Activated naive CD4-positive, alpha-beta T cell treated with anti-CD3 and anti-CD28 coated beads for 36 hours (primary cell): ENCODE measurements at regions of chr4 and their contacts with region 1.

Region 1: DNA sequence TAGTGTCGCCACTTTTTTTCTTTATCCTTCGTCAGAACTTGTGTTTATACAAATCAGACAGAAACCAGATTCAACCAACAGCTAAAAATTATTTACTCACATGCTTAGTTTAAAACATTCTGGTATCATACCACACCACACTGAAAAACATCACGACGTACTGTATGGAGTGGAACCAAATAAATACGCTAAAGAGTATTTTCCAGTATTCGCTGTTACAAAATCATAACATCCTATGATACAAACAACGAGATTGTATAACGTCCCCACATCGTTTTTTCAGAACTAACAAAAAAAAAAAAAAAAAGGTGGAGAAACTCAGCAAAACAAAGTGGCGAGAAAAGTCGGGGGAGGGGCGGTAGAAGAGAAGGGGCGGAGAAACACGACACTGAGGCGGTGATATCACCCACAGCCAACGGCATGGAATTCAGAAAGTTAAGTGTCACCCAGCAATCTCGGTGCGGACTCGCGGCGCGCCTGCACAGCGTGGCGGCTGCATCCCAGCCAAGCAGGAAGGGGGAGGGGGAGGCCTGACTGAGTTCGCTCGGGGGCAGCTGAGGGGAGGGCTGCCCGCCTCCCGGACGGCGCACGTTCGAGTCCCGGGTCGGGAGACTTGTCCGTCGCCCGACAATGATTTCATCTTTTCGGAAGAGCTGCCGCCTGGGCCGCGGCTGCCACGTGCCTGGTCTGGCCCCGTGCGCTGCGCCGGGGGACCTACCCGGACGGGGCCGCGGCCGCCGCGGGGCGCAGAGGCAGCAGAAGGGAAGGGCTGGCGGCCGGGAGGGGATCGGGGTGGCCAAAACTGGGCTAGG is 920 bp downstream of the SETD7 start:
- DNase-seq: peak; percentile 92
- H3K4me3 Mint-ChIP-seq: peak overlapping the region; percentile 94
- H3K27ac Mint-ChIP-seq: peak overlapping the region; percentile 90
- H3K4me1 Mint-ChIP-seq: peaks cover 41% of the 10 kb centered on the region
- H3K27me3 Mint-ChIP-seq: no peaks in the 10 kb centered on the region

Region 2: GRCh38 chr4:139015269-139015947 is 539.7 kb before region 1 on chr4 and contains the start of gene NOCT:
- CTCF ChIA-PET with region 1: no interaction called
- intact Hi-C with region 1: loop called (anchors 1 kb)
- DNase-seq: peak; percentile 97
- H3K4me3 Mint-ChIP-seq: peak within 1 kb of the TSS; percentile 91
- H3K27ac Mint-ChIP-seq: peak within 1 kb of the TSS; percentile 96
- H3K4me1 Mint-ChIP-seq: peaks cover 48% of the 10 kb centered on the region
- H3K27me3 Mint-ChIP-seq: no peaks in the 10 kb centered on the region
- total RNA-seq, gene NOCT: 9.3 to 10.4 TPM

Region 3: DNA sequence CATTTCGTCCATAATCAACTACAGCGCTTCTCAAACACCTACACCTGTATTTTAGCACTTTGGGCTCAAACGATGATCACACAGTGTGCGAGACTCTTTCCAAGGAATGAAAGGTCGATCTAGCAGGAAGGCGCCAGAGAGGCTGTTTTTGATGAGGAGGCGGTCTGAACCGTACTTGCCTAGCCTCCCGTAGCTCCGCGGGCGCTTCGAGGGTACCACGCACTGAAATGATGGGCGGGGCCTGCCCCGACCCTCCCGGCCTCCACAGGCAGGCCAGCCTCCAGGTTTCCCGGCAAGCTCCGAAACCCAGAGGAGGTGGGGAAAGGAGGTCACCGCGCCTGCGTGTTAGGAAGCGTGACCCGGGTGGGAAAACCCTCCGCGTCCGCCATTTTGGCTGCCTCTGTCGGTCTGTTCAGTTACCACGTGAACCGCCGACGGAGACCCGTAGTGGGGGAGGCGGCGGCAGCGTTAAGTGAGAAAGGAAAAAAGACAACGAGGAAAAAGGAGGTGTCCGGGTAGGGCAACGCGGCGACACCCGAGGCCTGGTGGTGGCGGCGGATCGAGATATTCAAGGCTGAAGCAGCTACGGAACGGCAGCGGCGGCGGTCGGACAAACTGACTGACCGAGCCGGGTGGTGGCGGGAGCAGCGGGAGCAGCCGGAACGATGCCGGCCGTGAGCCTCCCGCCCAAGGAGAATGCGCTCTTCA is 253.8 kb before region 1 on chr4 and contains the start of gene NAA15:
- CTCF ChIA-PET with region 1: interaction called, 3 read pairs
- intact Hi-C with region 1: loop called (anchors 1 kb)
- DNase-seq: peak; percentile 98
- H3K4me3 Mint-ChIP-seq: peak within 1 kb of the TSS; percentile 100
- H3K27ac Mint-ChIP-seq: peak within 1 kb of the TSS; percentile 98
- H3K4me1 Mint-ChIP-seq: peaks cover 56% of the 10 kb centered on the region
- H3K27me3 Mint-ChIP-seq: no peaks in the 10 kb centered on the region
- total RNA-seq, gene NAA15: 91.5 to 94.0 TPM

Region 4: DNA sequence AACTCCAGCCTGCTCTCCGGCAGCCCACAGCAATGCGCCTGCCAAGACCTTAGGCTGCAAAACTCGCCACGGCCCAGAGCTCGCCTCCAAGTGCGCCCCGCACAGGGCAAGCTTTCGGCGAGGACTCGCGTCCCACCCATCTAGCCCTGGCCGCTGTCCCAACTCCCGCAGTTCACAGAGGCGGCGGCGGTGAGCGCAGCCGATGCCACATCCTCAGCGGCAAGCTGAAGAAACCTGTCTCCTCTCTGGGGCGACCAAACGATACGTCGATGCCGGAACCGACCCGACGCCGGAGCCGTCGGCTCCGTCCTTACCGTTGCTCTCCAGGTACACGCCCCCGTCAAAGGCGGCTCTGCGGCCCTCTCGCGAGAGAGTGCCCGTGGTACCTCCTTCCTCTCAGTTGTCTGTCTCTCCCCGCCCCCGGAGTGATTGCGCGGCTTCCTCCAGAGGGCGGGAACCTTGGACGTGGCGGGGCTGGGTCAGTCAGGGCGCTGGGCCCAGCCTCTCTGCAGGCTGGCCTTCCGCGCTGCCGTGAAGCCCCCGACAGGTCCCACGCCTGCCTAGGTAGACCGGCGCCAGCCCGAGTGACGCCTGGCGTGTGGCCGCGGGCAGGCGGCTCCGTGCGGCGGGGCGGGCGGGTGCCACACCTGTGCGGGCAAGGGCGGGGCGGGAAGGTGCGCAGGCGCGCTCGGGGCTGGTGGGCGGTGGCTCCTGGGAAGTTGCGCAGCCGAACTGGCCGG is 101.6 kb before region 1 on chr4:
- CTCF ChIA-PET with region 1: interaction called, 3 read pairs
- intact Hi-C with region 1: loop called (anchors 1 kb)
- DNase-seq: peak; percentile 98
- H3K4me3 Mint-ChIP-seq: peak overlapping the region; percentile 97
- H3K27ac Mint-ChIP-seq: peak overlapping the region; percentile 98
- H3K4me1 Mint-ChIP-seq: peaks cover 50% of the 10 kb centered on the region
- H3K27me3 Mint-ChIP-seq: no peaks in the 10 kb centered on the region

Region 5: GRCh38 chr4:139522457-139522856 is 32.6 kb before region 1 on chr4:
- CTCF ChIA-PET with region 1: no interaction called
- intact Hi-C with region 1: no loop called
- DNase-seq: no peak
- H3K4me3 Mint-ChIP-seq: no peak overlapping the region
- H3K27ac Mint-ChIP-seq: no peak overlapping the region
- H3K4me1 Mint-ChIP-seq: peaks cover 7% of the 10 kb centered on the region
- H3K27me3 Mint-ChIP-seq: no peaks in the 10 kb centered on the region

Region 6: DNA sequence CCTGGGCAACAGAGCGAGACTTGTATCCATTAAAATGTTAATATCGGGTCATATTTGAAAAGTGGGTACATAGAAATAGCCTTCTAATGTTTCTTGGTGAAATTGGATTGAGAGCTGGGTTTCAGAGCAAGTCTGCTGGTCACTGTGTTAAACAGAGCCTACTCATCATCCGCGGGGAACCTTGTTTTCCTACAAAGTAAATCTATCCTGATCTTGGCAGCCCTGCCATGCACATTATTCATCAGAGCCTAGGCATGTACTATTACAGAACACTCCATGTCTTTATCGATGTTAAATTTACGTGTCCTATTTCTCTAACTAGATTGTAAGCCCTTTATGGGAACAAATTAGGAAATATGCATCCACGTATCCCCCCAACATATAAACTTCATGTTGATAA is 17.8 kb before region 1 on chr4:
- CTCF ChIA-PET with region 1: no interaction called
- intact Hi-C with region 1: no loop called
- DNase-seq: no peak
- H3K4me3 Mint-ChIP-seq: no peak overlapping the region
- H3K27ac Mint-ChIP-seq: no peak overlapping the region
- H3K4me1 Mint-ChIP-seq: no peaks in the 10 kb centered on the region
- H3K27me3 Mint-ChIP-seq: no peaks in the 10 kb centered on the region

Region 7: GRCh38 chr4:139593091-139593564 is 38.0 kb after region 1 on chr4:
- CTCF ChIA-PET with region 1: no interaction called
- intact Hi-C with region 1: no loop called
- DNase-seq: no peak
- H3K4me3 Mint-ChIP-seq: no peak overlapping the region
- H3K27ac Mint-ChIP-seq: no peak overlapping the region
- H3K4me1 Mint-ChIP-seq: no peaks in the 10 kb centered on the region
- H3K27me3 Mint-ChIP-seq: peaks cover 2% of the 10 kb centered on the region

Region 8: DNA sequence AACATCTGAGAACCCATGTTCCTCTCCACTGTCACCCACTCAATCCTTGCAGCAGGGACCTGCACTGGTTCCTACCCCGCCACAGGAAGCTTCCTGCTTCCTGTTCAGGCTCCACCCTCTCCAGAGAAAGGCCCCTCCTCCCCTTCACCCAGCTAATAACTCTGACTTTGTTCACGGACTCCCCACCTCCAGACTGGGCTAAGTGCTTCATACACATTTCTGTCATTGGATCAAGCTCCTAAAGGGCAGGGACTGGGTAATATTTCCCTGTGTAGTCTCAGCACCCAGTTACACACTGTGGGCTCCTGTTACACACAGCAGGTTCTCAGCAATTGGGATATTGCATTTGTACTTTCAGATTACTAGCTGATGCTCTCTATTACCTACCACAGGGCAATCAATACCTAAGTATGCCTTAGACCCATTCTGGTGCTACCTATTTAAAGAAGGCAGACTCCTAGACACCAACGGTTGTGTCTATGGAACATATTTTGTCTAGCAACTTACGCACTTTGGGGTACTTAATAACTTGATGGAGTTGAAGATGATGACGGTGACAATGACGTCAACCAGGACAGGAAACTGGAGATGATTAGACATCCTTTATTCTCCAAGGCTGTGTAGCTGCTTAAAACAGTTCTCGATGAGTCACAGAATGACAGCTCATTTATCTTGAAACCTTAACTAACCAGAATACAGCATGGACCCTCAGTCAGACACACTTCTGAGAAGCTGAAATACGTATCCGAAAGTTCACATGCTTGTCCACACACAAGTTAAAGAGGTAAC is 540.8 kb after region 1 on chr4:
- CTCF ChIA-PET with region 1: no interaction called
- intact Hi-C with region 1: loop called (anchors 2 kb)
- DNase-seq: peak; percentile 91
- H3K4me3 Mint-ChIP-seq: peak overlapping the region; percentile 90
- H3K27ac Mint-ChIP-seq: peak overlapping the region; percentile 99
- H3K4me1 Mint-ChIP-seq: peaks cover 77% of the 10 kb centered on the region
- H3K27me3 Mint-ChIP-seq: no peaks in the 10 kb centered on the region

Region 9: GRCh38 chr4:140373328-140374129 is 818.4 kb after region 1 on chr4 and contains the start of gene SCOC:
- CTCF ChIA-PET with region 1: no interaction called
- intact Hi-C with region 1: loop called (anchors 1 kb)
- DNase-seq: peak; percentile 99
- H3K4me3 Mint-ChIP-seq: no peak within 1 kb of the TSS
- H3K27ac Mint-ChIP-seq: peak within 1 kb of the TSS; percentile 69
- H3K4me1 Mint-ChIP-seq: peaks cover 33% of the 10 kb centered on the region
- H3K27me3 Mint-ChIP-seq: no peaks in the 10 kb centered on the region
- total RNA-seq, gene SCOC: 44.7 to 49.4 TPM